ENCODE measurements at regions of chr16 and their contacts with region 1.

Region 1: GRCh38 chr16:49350265-49351095 is 23.1 kb upstream of the C16orf78 start:
- DNase-seq: peak; percentile 60
- ATAC-seq: peak; percentile 57 to 68
- H3K4me3 ChIP-seq: no peak overlapping the region
- H3K27ac ChIP-seq: no peak overlapping the region
- H3K4me1 ChIP-seq: no peaks in the 10 kb centered on the region
- H3K27me3 ChIP-seq: peaks cover 23% of the 10 kb centered on the region
- CTCF ChIP-seq: peak; percentile 76

Region 2: DNA sequence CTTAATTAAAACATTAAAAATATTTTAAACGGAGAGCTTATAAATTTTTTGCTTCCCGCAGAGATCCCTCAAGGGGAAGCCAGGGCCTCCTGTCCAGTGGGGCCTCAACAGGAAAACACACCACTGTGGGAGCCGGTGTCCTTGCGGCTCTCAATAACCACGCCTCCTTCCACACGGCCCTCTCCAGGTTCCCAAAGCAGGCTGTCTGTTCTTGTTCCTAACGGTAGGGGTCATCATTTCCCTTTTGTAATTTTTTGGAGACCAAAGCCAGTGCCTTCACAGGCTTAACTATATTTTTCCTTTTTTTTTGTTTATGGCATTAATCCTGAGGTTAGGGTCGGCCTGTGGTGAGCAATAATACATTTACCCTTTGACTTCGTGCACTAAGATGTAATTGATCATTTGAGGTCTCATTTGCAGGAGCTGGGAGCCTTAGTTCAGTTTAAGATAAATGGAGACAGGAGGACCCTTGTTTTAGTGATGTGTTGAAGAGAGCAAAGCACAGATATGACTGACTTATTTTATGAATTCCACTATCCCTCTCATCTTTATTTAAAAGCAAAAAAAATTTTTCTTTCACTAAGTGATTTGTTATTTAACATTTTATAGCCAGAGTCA is 663.0 kb before region 1 on chr16:
- intact Hi-C with region 1: loop called (anchors 10 kb)
- DNase-seq: peak; percentile 52
- ATAC-seq: peak; percentile 78 to 79
- H3K4me3 ChIP-seq: no peak overlapping the region
- H3K27ac ChIP-seq: no peak overlapping the region
- H3K4me1 ChIP-seq: peaks cover 4% of the 10 kb centered on the region
- H3K27me3 ChIP-seq: no peaks in the 10 kb centered on the region
- CTCF ChIP-seq: peak; percentile 79